SK-N-SH (cell line): ENCODE measurements at regions of chr2 and their contacts with region 1.

Region 1: GRCh38 chr2:44479122-44479887 is 117.6 kb downstream of the CAMKMT start:
- DNase-seq: peak; percentile 81
- H3K4me3 ChIP-seq: peak overlapping the region in 1 of 2 experiments; percentile 23; a peak in 1 of 4 replicates
- H3K27ac ChIP-seq: peak overlapping the region in 1 of 2 experiments; percentile 65; a peak in 2 of 4 replicates
- H3K4me1 ChIP-seq: peaks cover 0 to 12% of the 10 kb centered on the region in 2 experiments; a peak in 2 of 4 replicates
- H3K27me3 ChIP-seq: no peaks in the 10 kb centered on the region
- CTCF ChIP-seq: peak; percentile 100
- EP300 ChIP-seq: peak; percentile 15 to 49; a peak in 1 of 4 replicates
- RAD21 ChIP-seq: peak; percentile 100

Region 2: DNA sequence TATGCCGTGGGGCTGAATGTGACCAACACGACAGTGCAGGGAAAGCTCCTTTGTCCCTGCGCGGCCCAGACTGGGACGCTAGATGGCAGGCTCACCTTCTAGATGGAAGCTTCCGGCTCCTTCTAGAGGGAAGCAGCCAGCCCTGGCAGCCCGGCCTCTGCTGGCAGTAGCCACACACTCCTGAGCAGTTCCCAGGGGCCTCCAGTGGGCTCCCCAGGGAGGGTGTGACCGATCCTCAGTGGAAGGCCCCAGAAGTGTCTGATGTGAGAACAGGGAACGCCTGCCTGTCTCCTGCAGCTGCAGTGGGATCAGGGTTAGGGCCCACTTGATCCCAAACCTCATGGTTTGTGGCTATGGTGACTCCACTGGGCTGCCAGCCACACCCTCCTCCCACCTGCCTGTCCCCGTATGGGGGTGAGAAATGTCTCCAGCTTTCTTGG is 435.0 kb before region 1 on chr2:
- CTCF ChIA-PET with region 1: interaction called, 38 read pairs
- POLR2A ChIA-PET with region 1: no interaction called
- DNase-seq: peak; percentile 90
- H3K4me3 ChIP-seq: no peak overlapping the region
- H3K27ac ChIP-seq: no peak overlapping the region
- H3K4me1 ChIP-seq: peaks cover 0 to 6% of the 10 kb centered on the region in 2 experiments; a peak in 1 of 4 replicates
- H3K27me3 ChIP-seq: no peaks in the 10 kb centered on the region
- CTCF ChIP-seq: peak; percentile 91
- EP300 ChIP-seq: peak in 1 of 2 experiments; percentile 76; a peak in 2 of 4 replicates
- RAD21 ChIP-seq: peak; percentile 97

Region 3: GRCh38 chr2:44130441-44130840 is 348.9 kb before region 1 on chr2:
- CTCF ChIA-PET with region 1: no interaction called
- POLR2A ChIA-PET with region 1: no interaction called
- DNase-seq: no peak
- H3K4me3 ChIP-seq: no peak overlapping the region
- H3K27ac ChIP-seq: peak overlapping the region; percentile 18 to 38; a peak in 3 of 4 replicates
- H3K4me1 ChIP-seq: peaks cover 0 to 4% of the 10 kb centered on the region in 2 experiments; a peak in 1 of 4 replicates
- H3K27me3 ChIP-seq: no peaks in the 10 kb centered on the region
- CTCF ChIP-seq: no peak
- EP300 ChIP-seq: no peak
- RAD21 ChIP-seq: no peak

Region 4: GRCh38 chr2:44267796-44268648 is 211.3 kb before region 1 on chr2:
- CTCF ChIA-PET with region 1: no interaction called
- POLR2A ChIA-PET with region 1: no interaction called
- DNase-seq: no peak
- H3K4me3 ChIP-seq: no peak overlapping the region
- H3K27ac ChIP-seq: no peak overlapping the region
- H3K4me1 ChIP-seq: no peaks in the 10 kb centered on the region; a peak in 1 of 4 replicates
- H3K27me3 ChIP-seq: no peaks in the 10 kb centered on the region
- CTCF ChIP-seq: no peak
- EP300 ChIP-seq: no peak
- RAD21 ChIP-seq: no peak

Region 5: DNA sequence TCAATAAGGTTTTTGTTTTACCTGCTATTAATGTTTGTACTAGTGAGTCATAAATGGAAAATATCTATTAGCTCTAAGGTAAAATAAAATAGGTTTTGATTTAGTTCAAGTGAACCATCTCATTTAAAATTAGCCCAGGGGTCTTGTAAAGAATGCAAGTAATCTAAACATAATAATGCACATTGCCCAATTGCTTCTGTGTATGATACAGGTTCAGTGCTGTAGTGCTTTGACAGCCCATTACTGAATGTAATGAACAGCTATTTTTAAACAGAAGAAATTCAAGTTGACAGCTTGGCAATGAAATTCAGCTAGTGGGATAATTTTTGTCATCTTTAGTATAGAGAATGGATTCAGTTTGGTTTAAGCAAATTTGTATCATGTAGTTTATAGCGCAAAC is 26.0 kb before region 1 on chr2:
- CTCF ChIA-PET with region 1: interaction called, 81 read pairs
- POLR2A ChIA-PET with region 1: no interaction called
- DNase-seq: no peak
- H3K4me3 ChIP-seq: no peak overlapping the region
- H3K27ac ChIP-seq: no peak overlapping the region
- H3K4me1 ChIP-seq: no peaks in the 10 kb centered on the region; a peak in 1 of 4 replicates
- H3K27me3 ChIP-seq: no peaks in the 10 kb centered on the region
- CTCF ChIP-seq: no peak
- EP300 ChIP-seq: no peak
- RAD21 ChIP-seq: no peak

Region 6: GRCh38 chr2:44566059-44566458 is 86.8 kb after region 1 on chr2:
- CTCF ChIA-PET with region 1: interaction called, 65 read pairs
- POLR2A ChIA-PET with region 1: no interaction called
- DNase-seq: peak; percentile 80
- H3K4me3 ChIP-seq: no peak overlapping the region
- H3K27ac ChIP-seq: peak overlapping the region in 1 of 2 experiments; percentile 97; a peak in 2 of 4 replicates
- H3K4me1 ChIP-seq: peaks cover 0 to 28% of the 10 kb centered on the region in 2 experiments; a peak in 3 of 4 replicates
- H3K27me3 ChIP-seq: no peaks in the 10 kb centered on the region
- CTCF ChIP-seq: no peak
- EP300 ChIP-seq: peak in 1 of 2 experiments; percentile 99; a peak in 2 of 4 replicates
- RAD21 ChIP-seq: peak; percentile 50

Region 7: DNA sequence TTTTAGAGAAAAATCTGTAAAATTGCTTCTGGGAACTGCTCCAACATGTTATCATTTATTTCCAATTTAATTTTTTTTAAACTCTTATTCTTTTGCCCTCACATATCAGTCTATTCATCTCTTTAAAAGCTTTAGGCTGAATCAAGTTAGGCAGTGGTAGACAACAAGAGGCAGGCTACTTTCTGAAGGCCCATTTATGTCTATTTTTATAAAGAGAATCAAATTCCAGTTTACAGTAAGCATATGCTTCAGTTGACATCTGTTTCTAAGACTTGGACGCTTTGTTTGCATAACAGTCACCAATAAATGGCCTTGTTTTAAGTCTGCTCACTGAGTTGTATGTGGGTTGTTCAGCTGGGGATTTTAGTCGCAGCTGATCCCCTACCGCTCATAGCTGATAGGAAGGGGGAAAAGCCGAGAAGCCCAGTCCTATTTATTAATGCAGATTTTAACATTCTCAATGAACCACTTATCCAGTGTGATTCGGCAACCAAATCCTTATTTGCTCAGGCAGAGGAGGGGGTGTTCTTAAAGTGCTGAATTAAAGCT is 201.8 kb after region 1 on chr2:
- CTCF ChIA-PET with region 1: interaction called, 137 read pairs
- POLR2A ChIA-PET with region 1: interaction called, 3 read pairs
- DNase-seq: peak; percentile 78
- H3K4me3 ChIP-seq: peak overlapping the region; percentile 18 to 35; a peak in 3 of 4 replicates
- H3K27ac ChIP-seq: peak overlapping the region; percentile 49 to 100; a peak in 3 of 4 replicates
- H3K4me1 ChIP-seq: peaks cover 10 to 70% of the 10 kb centered on the region in 2 experiments; a peak in 2 of 4 replicates
- H3K27me3 ChIP-seq: no peaks in the 10 kb centered on the region
- CTCF ChIP-seq: no peak
- EP300 ChIP-seq: peak; percentile 34 to 97; a peak in 3 of 4 replicates
- RAD21 ChIP-seq: peak; percentile 48

Region 8: GRCh38 chr2:44763275-44763782 is 284.0 kb after region 1 on chr2:
- CTCF ChIA-PET with region 1: interaction called, 88 read pairs
- POLR2A ChIA-PET with region 1: no interaction called
- DNase-seq: no peak
- H3K4me3 ChIP-seq: no peak overlapping the region
- H3K27ac ChIP-seq: no peak overlapping the region
- H3K4me1 ChIP-seq: peaks cover 0 to 23% of the 10 kb centered on the region in 2 experiments; a peak in 2 of 4 replicates
- H3K27me3 ChIP-seq: no peaks in the 10 kb centered on the region
- CTCF ChIP-seq: no peak
- EP300 ChIP-seq: no peak
- RAD21 ChIP-seq: no peak

Region 9: DNA sequence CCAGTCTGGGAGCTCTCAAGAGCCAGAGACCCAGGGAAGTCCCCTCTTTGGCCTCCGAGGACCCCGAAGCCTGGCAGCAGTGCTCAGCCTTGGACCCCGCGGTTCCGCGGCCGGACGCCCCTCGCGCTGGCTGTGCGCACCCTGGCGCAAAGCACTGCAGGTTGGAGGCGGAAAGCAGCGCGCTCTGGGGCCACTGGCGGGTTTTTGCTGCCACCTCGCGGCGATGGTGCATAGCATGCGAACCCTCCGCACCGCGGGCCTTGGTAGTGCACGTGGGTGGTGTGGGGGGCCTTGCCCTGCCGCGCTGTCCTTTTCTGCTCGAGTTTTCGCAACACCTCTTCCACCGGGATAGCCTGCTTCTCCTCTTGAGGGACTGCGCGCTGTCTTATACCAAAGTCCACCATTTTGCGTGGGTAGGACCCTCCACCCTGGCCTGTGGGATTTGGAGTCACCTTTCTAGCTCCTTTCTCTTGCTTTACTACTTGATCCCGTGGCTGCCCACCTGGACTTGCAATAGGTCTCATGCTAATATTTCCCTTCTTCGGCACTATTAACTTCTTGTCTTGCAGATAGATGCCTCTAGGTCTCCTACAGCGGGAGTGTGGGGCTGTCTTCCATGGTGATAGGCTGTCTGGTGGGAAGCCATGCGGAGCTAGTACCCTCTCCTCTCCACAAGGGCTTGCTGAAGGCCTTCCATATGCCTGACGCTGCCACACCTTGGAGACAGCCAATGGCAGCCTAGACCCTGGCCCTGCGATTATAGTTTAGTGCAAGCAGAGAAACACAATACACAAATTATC is 476.5 kb after region 1 on chr2:
- CTCF ChIA-PET with region 1: interaction called, 581 read pairs
- POLR2A ChIA-PET with region 1: interaction called, 12 read pairs
- DNase-seq: peak; percentile 94
- H3K4me3 ChIP-seq: peak overlapping the region; percentile 38; a peak in 3 of 4 replicates
- H3K27ac ChIP-seq: no peak overlapping the region
- H3K4me1 ChIP-seq: peaks cover 0 to 17% of the 10 kb centered on the region in 2 experiments; a peak in 1 of 4 replicates
- H3K27me3 ChIP-seq: no peaks in the 10 kb centered on the region
- CTCF ChIP-seq: peak; percentile 94
- EP300 ChIP-seq: no peak
- RAD21 ChIP-seq: peak; percentile 99